ENCODE measurements at regions of chr2 and their contacts with region 1.

Region 1: DNA sequence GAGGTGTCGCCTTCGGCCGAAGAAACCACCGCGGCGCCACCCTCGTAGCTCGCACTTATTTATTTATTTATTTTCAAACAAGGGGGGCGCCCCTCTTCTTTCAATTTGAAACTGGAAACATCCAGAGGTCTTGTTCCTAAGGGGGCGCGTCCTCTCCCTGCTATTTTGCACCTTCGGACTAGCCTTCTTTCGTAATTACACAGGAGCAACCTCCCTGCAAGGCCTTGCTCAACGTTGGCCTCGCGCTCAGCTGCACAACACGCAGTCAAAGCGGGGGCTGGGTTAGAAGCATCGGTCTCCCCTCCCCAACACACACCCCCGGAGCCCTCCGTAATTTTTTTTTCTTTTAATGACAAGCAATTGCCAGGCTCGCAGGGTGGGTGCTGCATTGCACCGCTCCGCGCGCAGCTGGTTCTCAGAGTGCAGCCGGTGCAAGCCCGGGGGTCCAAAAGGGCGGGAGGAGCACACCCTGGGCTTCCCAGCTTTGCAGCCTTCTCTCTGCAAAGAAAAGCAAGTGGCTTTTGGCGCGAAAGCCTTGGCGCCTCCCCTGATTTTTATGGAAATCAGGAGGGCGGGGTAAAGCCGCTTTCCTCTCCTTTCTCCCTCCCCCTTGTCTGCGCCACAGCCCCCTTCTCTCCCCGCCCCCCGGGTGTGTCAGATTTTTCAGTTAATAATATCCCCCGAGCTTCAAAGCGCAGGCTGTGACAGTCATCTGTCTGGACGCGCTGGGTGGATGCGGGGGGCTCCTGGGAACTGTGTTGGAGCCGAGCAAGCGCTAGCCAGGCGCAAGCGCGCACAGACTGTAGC is at the start of gene MYCN:
- H3K4me3 ChIP-seq: peak within 1 kb of the TSS; percentile 63
- H3K27ac ChIP-seq: peak within 1 kb of the TSS; percentile 62
- H3K4me1 ChIP-seq: peaks cover 8% of the 10 kb centered on the region
- CTCF ChIP-seq: peak; percentile 91

Region 2: GRCh38 chr2:15531095-15531854 is 408.8 kb before region 1 on chr2:
- CTCF ChIA-PET with region 1: no interaction called
- POLR2A ChIA-PET with region 1: no interaction called
- H3K4me3 ChIP-seq: no peak overlapping the region
- H3K27ac ChIP-seq: no peak overlapping the region
- H3K4me1 ChIP-seq: no peaks in the 10 kb centered on the region
- CTCF ChIP-seq: no peak

Region 3: GRCh38 chr2:15636972-15637785 is 302.9 kb before region 1 on chr2:
- CTCF ChIA-PET with region 1: interaction called, 13 read pairs
- POLR2A ChIA-PET with region 1: no interaction called
- H3K4me3 ChIP-seq: no peak overlapping the region
- H3K27ac ChIP-seq: no peak overlapping the region
- H3K4me1 ChIP-seq: no peaks in the 10 kb centered on the region
- CTCF ChIP-seq: peak; percentile 83

Region 4: DNA sequence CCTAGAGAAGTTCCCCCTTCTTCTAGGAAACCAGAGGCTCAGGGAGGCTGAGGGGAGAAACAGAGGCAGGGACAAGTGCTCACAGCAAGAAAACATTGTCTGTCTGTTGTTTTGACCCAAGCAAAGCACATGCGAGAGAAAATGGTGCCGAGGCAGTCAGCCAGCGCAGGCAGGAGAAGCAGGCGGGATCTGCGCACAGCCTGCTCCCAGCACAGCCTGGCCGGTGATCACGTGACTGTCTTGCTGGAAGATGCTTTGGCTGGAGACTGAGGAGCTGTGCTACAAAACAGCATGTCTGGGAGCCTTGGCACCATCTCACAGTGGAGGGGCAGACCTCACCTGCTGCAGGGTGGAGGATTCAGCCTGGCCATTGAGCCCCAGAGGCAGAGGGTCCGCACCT is 93.4 kb before region 1 on chr2:
- CTCF ChIA-PET with region 1: no interaction called
- POLR2A ChIA-PET with region 1: no interaction called
- H3K4me3 ChIP-seq: no peak overlapping the region
- H3K27ac ChIP-seq: no peak overlapping the region
- H3K4me1 ChIP-seq: no peaks in the 10 kb centered on the region
- CTCF ChIP-seq: no peak

Region 5: DNA sequence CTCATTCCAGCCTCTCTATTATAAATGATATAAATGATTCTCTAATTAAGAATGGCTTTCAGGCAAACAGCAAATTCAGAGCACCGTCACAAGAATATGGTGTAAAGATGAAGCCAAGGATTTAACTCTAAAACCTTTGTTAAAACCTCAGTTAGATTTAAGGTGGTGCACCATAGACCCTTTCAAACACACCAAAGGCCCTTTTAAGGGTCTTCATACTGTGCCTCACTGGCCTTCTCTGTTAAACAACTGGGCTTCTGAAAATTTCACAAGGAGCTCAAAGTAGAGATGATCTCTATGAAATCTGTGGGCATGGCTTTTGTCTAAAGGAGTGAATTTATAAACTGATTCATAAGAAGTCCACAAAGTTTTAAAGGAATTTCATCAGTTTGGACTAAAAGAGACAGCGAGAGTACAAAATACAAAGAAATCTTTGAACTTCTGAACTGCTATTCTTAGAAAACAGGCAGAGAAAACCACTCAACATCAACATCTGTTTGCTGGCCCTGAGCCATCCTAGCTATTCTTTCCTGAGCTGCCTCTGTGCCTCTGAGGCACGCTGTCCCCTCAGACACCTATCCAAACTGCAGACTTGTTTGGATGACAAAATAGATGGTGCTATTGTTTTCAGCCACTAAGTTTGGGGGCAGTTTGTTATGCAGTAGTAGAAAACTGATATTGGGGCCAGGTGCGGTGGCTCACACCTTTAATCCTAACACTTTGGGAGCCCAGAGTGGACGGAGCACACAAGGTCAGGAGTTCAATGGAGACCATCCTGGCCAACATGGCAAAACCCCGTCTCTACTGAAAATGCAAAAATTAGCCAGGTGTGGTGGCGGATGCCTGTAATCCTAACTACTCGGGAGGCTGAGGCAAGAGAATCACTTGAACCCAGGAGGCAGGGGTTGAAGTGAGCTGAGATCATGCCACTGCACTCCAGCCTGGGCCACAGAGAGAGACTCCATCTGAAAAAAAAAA is 72.6 kb before region 1 on chr2:
- CTCF ChIA-PET with region 1: no interaction called
- POLR2A ChIA-PET with region 1: no interaction called
- H3K4me3 ChIP-seq: no peak overlapping the region
- H3K27ac ChIP-seq: no peak overlapping the region
- H3K4me1 ChIP-seq: no peaks in the 10 kb centered on the region
- CTCF ChIP-seq: no peak

Region 6: DNA sequence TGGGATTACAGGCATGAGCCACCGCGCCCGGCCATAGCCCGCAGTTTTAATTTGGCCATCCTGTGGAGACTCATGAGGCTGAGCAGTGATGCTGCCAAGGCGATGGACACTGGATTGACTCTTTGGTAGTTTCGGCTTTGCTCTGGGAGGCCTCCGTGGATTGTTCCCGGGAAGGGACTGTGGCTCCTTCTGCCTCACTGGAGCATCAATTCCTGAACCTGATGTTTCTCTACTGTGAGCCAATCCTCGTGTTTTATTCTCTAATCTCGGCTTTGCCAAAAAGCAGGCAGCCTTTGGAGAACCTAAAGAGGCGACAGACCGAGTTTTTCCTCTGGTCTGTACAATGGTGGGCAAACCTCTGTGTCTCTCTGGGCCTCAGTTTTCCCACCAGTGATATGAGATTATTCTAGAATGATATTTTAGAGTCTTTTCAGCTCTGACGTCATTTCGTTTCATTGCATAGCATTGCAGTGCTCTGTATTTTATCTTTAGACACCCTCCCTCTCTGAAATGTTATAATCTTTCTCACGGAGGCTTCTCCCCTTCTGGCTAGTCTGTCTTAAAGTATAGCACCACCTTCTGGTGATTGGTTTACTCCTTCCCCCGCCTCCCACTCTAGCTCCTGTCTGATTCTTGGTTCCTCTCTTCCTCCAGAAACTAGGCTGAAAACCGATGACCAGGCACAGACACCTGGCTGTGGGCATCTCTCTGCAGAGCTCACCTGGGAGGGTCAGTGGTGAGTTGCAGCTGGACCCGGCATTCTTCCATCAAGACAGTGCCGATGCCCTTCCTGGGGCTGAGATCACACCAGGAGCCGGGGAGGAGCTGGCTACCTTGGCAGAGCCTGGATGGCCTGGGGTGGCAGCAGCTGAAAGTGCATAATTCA is 341.6 kb after region 1 on chr2:
- CTCF ChIA-PET with region 1: interaction called, 14 read pairs
- POLR2A ChIA-PET with region 1: interaction called, 3 read pairs
- H3K4me3 ChIP-seq: no peak overlapping the region
- H3K27ac ChIP-seq: no peak overlapping the region
- H3K4me1 ChIP-seq: no peaks in the 10 kb centered on the region
- CTCF ChIP-seq: no peak

Region 7: DNA sequence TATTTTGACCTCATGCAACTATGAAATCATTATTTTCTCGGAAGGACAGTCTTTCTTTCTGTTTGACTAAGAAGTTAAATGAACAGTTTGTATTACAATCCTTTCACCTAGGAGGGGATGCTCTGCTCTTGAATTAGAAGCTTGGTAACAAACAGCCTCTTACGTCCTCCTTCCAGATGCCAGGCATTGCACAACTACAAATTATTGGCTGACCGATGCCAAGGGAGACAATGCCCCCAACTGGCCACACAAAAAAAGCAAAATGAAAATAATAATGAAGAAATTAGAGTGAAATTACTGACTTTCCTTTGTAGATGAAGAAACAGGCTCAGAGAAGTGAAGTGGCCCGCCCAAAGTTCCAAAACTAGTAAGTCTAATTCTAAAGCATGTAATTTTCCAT is 547.6 kb after region 1 on chr2:
- CTCF ChIA-PET with region 1: interaction called, 20 read pairs
- POLR2A ChIA-PET with region 1: no interaction called
- H3K4me3 ChIP-seq: no peak overlapping the region
- H3K27ac ChIP-seq: no peak overlapping the region
- H3K4me1 ChIP-seq: no peaks in the 10 kb centered on the region
- CTCF ChIP-seq: no peak